ENCODE measurements at regions of chr20 and their contacts with region 1.

Region 1: GRCh38 chr20:47205577-47206498 is 150.7 kb downstream of the ZMYND8 start:
- DNase-seq: peak; percentile 93
- H3K4me3 Mint-ChIP-seq: peak overlapping the region; percentile 51
- H3K27ac Mint-ChIP-seq: peak overlapping the region; percentile 75
- H3K4me1 Mint-ChIP-seq: peaks cover 61% of the 10 kb centered on the region
- H3K27me3 Mint-ChIP-seq: no peaks in the 10 kb centered on the region
- CTCF ChIP-seq: peak; percentile 99

Region 2: DNA sequence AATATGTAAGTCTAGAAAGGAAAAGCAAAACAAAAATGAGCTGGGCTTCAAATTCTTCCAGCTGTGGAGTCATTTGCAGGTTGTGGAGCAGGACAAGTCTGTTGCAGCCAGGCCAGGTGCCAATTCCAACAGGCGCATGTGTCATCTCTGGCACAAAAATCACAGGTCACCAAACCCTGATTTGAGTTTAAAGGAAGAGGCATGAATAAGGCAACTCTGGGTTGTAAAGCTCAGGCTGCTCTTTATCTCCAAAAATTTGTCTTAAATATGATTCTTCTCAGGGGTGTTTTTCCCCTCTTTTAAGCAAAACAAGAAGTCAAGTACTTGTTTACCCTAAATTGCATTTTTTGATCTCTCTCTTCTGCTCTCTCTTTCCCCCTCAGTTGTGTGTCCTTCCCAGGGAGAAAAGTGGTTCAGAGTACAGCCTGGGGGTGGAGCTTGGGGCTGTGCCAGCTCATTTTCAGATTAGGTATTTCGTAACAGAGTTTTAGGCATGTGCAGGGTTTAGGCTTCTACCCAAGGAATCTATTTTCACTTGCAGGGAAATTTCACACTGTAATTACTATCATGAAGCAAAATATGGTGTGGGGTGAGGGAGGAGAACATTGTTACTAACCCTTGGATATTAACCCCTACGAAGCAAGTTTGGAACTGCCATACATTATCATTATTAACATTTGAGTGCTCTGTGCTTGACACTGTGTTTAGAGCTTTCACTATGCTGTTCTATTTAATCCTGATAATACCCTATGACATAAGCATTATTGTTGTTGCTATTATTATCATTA is 287.5 kb after region 1 on chr20:
- CTCF ChIA-PET with region 1: interaction called, 4 read pairs
- intact Hi-C with region 1: loop called (anchors 10 kb)
- DNase-seq: peak; percentile 95
- H3K4me3 Mint-ChIP-seq: peak overlapping the region; percentile 35
- H3K27ac Mint-ChIP-seq: peak overlapping the region; percentile 68
- H3K4me1 Mint-ChIP-seq: peaks cover 37% of the 10 kb centered on the region
- H3K27me3 Mint-ChIP-seq: no peaks in the 10 kb centered on the region
- CTCF ChIP-seq: no peak

Region 3: GRCh38 chr20:47620808-47621805 is 415.3 kb after region 1 on chr20:
- CTCF ChIA-PET with region 1: interaction called, 7 read pairs
- intact Hi-C with region 1: loop called (anchors 10 kb)
- DNase-seq: peak; percentile 48
- H3K4me3 Mint-ChIP-seq: no peak overlapping the region
- H3K27ac Mint-ChIP-seq: peak overlapping the region; percentile 11
- H3K4me1 Mint-ChIP-seq: peaks cover 17% of the 10 kb centered on the region
- H3K27me3 Mint-ChIP-seq: no peaks in the 10 kb centered on the region
- CTCF ChIP-seq: peak; percentile 90

Region 4: GRCh38 chr20:48033569-48033968 is 827.7 kb after region 1 on chr20:
- CTCF ChIA-PET with region 1: interaction called, 11 read pairs
- intact Hi-C with region 1: no loop called
- DNase-seq: no peak
- H3K4me3 Mint-ChIP-seq: no peak overlapping the region
- H3K27ac Mint-ChIP-seq: no peak overlapping the region
- H3K4me1 Mint-ChIP-seq: no peaks in the 10 kb centered on the region
- H3K27me3 Mint-ChIP-seq: peaks cover 22% of the 10 kb centered on the region
- CTCF ChIP-seq: no peak